ENCODE measurements at regions of chr9 and their contacts with region 1.

Region 1: GRCh38 chr9:68546596-68547390 is 6.1 kb upstream of the TMEM252 start:
- DNase-seq: no peak
- H3K4me3 ChIP-seq: no peak overlapping the region
- H3K4me1 ChIP-seq: no peaks in the 10 kb centered on the region
- H3K27me3 ChIP-seq: no peaks in the 10 kb centered on the region

Region 2: DNA sequence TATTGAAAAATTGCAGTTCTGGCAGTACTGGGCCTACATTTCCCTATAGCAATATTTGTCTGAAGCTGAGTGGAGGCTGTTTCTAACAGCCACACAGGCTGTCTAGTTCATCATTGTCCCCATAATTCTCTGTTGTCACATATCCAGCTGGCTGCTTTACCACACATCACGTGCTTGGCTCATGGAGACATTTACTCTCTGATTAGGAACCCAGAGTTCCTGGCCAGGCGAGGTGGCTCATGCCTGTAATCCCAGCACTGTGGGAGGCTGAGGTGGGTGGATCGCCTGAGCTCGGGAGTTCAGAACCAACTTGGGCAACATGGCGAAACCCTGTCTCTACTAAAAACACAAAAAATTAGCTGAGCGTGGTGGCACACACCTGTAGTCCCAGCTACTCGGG is 109.0 kb before region 1 on chr9:
- in situ Hi-C with region 1: loop called (anchors 25 kb)
- DNase-seq: no peak
- H3K4me3 ChIP-seq: no peak overlapping the region
- H3K4me1 ChIP-seq: no peaks in the 10 kb centered on the region
- H3K27me3 ChIP-seq: no peaks in the 10 kb centered on the region

Region 3: DNA sequence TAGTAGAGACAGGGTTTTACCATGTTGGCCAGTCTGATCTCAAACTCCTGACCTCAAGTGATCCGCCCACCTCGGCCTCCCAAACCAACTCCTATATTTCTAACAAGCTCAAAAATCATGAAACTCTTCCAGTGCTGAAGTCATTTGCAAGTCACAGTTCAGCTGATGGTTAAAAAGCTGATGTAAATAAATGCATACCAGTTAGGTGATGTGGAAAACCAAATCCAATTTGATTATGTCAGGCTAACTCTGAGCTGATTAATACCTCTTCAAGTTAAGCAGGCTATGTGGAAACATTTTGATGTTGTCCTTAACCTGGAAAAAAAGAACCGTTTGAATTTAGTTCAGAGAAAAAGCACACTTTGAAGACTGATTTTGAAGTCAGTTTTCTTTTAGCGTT is 57.1 kb before region 1 on chr9:
- in situ Hi-C with region 1: loop called (anchors 10 kb)
- DNase-seq: no peak
- H3K4me3 ChIP-seq: no peak overlapping the region
- H3K4me1 ChIP-seq: no peaks in the 10 kb centered on the region
- H3K27me3 ChIP-seq: no peaks in the 10 kb centered on the region

Measured in HAP-1 (cell line).